HCT116 (cell line): ENCODE measurements at regions of chr1 and their contacts with region 1.

Region 1: GRCh38 chr1:17045634-17046333 is 8.0 kb downstream of the SDHB start:
- DNase-seq: peak; percentile 49
- ATAC-seq: peak; percentile 68; the same call in 1 of the 2 replicates
- H3K4me3 ChIP-seq: no peak overlapping the region
- H3K27ac ChIP-seq: no peak overlapping the region
- H3K4me1 ChIP-seq: no peaks in the 10 kb centered on the region
- H3K27me3 ChIP-seq: no peaks in the 10 kb centered on the region
- CTCF ChIP-seq: peak; percentile 67 to 93 (median 72)
- POLR2A ChIP-seq: no peak
- RAD21 ChIP-seq: peak; percentile 92

Region 2: DNA sequence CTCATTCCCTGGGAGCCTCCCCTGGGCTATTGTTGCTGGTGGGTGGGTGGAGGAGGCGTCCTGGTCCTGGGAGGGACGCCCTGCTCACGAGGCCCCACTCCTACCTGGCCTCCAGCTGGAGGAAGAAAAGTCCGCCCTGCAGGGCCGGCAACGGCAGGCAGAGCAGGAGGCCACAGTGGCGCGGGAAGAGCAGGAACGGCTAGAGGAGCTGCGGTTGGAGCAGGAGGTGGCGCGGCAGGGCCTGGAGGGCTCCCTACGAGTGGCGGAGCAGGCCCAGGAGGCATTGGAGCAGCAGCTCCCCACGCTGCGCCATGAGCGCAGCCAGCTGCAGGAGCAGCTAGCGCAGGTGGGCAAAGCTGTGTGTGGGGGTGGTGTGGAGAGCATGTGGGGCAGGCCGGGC is 99.1 kb before region 1 on chr1:
- CTCF ChIA-PET with region 1: interaction called, 15 read pairs
- POLR2A ChIA-PET with region 1: no interaction called
- RAD21 ChIA-PET with region 1: interaction called in 1 of 2 experiments, 6 read pairs
- intact Hi-C with region 1: loop called (anchors 1 kb)
- DNase-seq: no peak
- ATAC-seq: no peak
- H3K4me3 ChIP-seq: no peak overlapping the region
- H3K27ac ChIP-seq: no peak overlapping the region
- H3K4me1 ChIP-seq: no peaks in the 10 kb centered on the region; a peak in 1 of 4 replicates
- H3K27me3 ChIP-seq: no peaks in the 10 kb centered on the region
- CTCF ChIP-seq: no peak
- POLR2A ChIP-seq: no peak
- RAD21 ChIP-seq: no peak

Region 3: GRCh38 chr1:16960560-16961296 is 85.1 kb before region 1 on chr1:
- CTCF ChIA-PET with region 1: interaction called, 4 read pairs
- POLR2A ChIA-PET with region 1: no interaction called
- RAD21 ChIA-PET with region 1: no interaction called
- intact Hi-C with region 1: loop called (anchors 1 kb)
- DNase-seq: peak; percentile 72
- ATAC-seq: peak; percentile 91
- H3K4me3 ChIP-seq: peak overlapping the region; percentile 35 to 54
- H3K27ac ChIP-seq: peak overlapping the region; percentile 84
- H3K4me1 ChIP-seq: peaks cover 12 to 17% of the 10 kb centered on the region in 2 experiments
- H3K27me3 ChIP-seq: no peaks in the 10 kb centered on the region
- CTCF ChIP-seq: peak; percentile 63 to 85 (median 66)
- POLR2A ChIP-seq: no peak
- RAD21 ChIP-seq: peak; percentile 38

Region 4: DNA sequence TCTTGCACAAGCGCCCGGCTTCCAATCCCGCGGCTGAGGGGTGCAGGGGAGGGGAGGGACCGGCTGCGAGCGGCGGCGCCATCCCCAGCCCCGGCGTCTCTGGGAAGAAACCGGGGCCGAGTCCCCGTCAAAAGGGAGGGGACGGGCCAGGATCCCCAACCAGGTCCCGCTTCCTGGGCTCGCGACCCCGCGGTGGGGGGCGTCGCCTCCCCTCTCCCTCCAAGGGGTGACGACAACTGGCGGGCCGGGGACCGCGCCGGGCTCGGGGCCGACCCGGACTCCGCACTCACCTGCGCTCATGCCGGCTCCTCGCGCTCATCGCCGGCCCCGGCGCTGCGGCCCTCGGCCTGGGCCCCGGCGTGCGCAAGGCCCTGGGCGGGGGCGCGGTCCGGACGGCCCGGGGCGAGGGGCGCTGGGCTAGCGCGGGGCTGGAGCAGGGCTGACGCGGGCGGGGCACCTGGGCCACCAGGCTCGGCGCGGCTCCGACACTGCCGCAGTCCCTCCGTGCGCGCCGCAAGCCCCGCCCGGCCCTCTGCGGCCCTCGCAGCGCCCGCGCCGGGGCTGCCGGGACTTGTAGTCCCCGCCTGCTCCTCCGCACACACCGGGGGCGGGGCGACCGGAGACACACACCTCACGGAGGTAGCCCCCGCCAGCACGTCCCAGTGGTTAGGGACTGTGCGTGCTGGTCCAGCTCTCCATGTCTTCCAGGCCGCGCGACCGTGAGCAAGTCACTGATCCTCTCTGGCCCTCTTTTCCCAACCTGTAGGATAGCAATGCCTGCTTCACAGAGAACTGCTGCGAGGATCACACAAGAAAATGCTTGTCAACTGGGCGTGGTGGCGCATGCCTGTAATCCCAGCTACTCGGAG is 34.1 kb before region 1 on chr1 and contains the start of gene ATP13A2:
- CTCF ChIA-PET with region 1: interaction called, 3 read pairs
- POLR2A ChIA-PET with region 1: no interaction called
- RAD21 ChIA-PET with region 1: no interaction called
- intact Hi-C with region 1: loop called (anchors 5 kb)
- DNase-seq: peak; percentile 67
- ATAC-seq: peak; percentile 97
- H3K4me3 ChIP-seq: peak within 1 kb of the TSS; percentile 81 to 94
- H3K27ac ChIP-seq: peak within 1 kb of the TSS; percentile 70; the same call in 1 of the 2 replicates
- H3K4me1 ChIP-seq: peaks cover 17 to 40% of the 10 kb centered on the region in 2 experiments
- H3K27me3 ChIP-seq: no peaks in the 10 kb centered on the region
- CTCF ChIP-seq: no peak
- POLR2A ChIP-seq: peak; percentile 51
- RAD21 ChIP-seq: no peak
- total RNA-seq, gene ATP13A2: 60.5 TPM

Region 5: GRCh38 chr1:17027403-17027802 is 18.4 kb before region 1 on chr1:
- CTCF ChIA-PET with region 1: no interaction called
- POLR2A ChIA-PET with region 1: no interaction called
- RAD21 ChIA-PET with region 1: no interaction called
- intact Hi-C with region 1: no loop called
- DNase-seq: no peak
- ATAC-seq: 0 out of 2 replicates have a peak, but pooled peaks have one; percentile 38
- H3K4me3 ChIP-seq: no peak overlapping the region
- H3K27ac ChIP-seq: no peak overlapping the region
- H3K4me1 ChIP-seq: no peaks in the 10 kb centered on the region
- H3K27me3 ChIP-seq: no peaks in the 10 kb centered on the region
- CTCF ChIP-seq: no peak
- POLR2A ChIP-seq: no peak
- RAD21 ChIP-seq: no peak

Region 6: GRCh38 chr1:17201201-17202021 is 155.6 kb after region 1 on chr1:
- CTCF ChIA-PET with region 1: no interaction called
- POLR2A ChIA-PET with region 1: no interaction called
- RAD21 ChIA-PET with region 1: no interaction called
- intact Hi-C with region 1: no loop called
- DNase-seq: no peak
- ATAC-seq: peak; percentile 67
- H3K4me3 ChIP-seq: no peak overlapping the region
- H3K27ac ChIP-seq: no peak overlapping the region
- H3K4me1 ChIP-seq: peaks cover 6 to 29% of the 10 kb centered on the region in 2 experiments; a peak in 3 of 4 replicates
- H3K27me3 ChIP-seq: no peaks in the 10 kb centered on the region
- CTCF ChIP-seq: no peak
- POLR2A ChIP-seq: no peak
- RAD21 ChIP-seq: no peak

Region 7: DNA sequence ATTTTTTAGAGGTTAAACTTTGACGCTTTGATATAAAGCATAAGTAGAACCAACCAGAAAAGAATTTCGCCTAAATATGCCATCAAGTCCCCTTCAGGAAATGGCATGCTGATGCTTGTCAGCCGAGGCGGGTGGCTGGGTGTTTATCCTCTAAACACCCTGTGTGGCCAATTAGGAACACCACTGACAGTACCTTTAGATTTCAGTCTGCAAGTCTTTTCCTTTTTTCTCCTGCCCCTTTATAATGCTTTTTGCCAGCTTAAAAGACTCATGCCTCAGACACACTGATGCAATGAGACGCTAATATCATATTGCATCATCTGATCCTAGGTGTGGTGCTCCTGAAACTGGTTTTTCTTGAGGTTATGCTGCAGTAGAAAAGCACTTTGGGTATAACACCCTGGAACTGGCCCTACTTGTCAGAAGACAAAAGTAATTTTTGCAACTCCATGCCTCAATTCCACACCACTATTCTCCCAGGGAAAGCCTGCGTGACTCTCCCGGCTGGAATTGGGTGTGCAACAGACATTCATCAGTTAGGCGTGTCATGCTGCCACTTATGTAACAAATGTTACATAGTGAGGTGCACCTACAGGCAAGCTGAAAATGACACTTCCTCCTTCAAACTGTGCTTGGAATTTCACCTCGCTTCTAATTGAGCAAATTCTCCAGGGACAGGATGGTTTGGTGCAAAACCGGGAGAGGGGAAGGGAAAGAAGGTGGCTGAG is 395.6 kb after region 1 on chr1:
- CTCF ChIA-PET with region 1: no interaction called
- POLR2A ChIA-PET with region 1: no interaction called
- RAD21 ChIA-PET with region 1: no interaction called
- intact Hi-C with region 1: no loop called
- DNase-seq: peak; percentile 67
- ATAC-seq: no peak
- H3K4me3 ChIP-seq: peak overlapping the region; percentile 0 to 23
- H3K27ac ChIP-seq: peak overlapping the region; percentile 31
- H3K4me1 ChIP-seq: peaks cover 55 to 57% of the 10 kb centered on the region in 2 experiments
- H3K27me3 ChIP-seq: no peaks in the 10 kb centered on the region
- CTCF ChIP-seq: 0 out of 6 replicates have a peak, but pooled peaks of 1 of the 3 experiments have one; percentile 3
- POLR2A ChIP-seq: no peak
- RAD21 ChIP-seq: no peak

Region 8: GRCh38 chr1:17507916-17508315 is 462.1 kb after region 1 on chr1:
- CTCF ChIA-PET with region 1: no interaction called
- POLR2A ChIA-PET with region 1: no interaction called
- RAD21 ChIA-PET with region 1: no interaction called
- intact Hi-C with region 1: no loop called
- DNase-seq: no peak
- ATAC-seq: peak; percentile 94
- H3K4me3 ChIP-seq: no peak overlapping the region
- H3K27ac ChIP-seq: no peak overlapping the region
- H3K4me1 ChIP-seq: peaks cover 0 to 2% of the 10 kb centered on the region in 2 experiments; a peak in 1 of 4 replicates
- H3K27me3 ChIP-seq: no peaks in the 10 kb centered on the region
- CTCF ChIP-seq: peak in 2 of 3 experiments; percentile 54 to 57; a peak in 4 of 6 replicates
- POLR2A ChIP-seq: no peak
- RAD21 ChIP-seq: peak; percentile 27; the same call in 1 of the 2 replicates